ENCODE measurements at regions of chr7 and their contacts with region 1.

Region 1: DNA sequence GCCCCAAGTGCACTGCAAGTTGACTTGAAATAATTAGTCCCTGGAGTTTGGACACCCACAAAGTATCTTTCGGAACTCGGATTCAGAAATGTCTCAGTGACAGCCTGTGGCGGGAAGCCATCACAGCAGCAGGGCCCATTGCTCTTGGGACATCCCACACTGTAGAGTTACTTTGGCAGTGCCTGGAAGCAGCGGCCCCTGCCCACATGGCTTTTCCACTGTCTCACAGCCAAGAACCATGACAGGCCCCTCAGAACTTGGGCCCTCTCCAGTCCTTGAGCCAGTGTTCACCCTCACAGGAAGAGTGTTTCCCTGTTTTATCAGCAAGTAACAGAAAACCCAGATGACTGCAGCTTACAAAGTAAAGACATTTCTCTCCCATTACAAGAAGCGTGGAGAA is 477.0 kb upstream of the GALNT17 start:
- DNase-seq: peak in 1 of 2 donors; percentile 31
- ATAC-seq: peak in 1 of 4 donors; percentile 33
- H3K4me3 ChIP-seq: no peak overlapping the region
- H3K27ac ChIP-seq: no peak overlapping the region
- H3K4me1 ChIP-seq: peaks cover 26% of the 10 kb centered on the region
- H3K27me3 ChIP-seq: no peaks in the 10 kb centered on the region
- CTCF ChIP-seq: no peak

Region 2: DNA sequence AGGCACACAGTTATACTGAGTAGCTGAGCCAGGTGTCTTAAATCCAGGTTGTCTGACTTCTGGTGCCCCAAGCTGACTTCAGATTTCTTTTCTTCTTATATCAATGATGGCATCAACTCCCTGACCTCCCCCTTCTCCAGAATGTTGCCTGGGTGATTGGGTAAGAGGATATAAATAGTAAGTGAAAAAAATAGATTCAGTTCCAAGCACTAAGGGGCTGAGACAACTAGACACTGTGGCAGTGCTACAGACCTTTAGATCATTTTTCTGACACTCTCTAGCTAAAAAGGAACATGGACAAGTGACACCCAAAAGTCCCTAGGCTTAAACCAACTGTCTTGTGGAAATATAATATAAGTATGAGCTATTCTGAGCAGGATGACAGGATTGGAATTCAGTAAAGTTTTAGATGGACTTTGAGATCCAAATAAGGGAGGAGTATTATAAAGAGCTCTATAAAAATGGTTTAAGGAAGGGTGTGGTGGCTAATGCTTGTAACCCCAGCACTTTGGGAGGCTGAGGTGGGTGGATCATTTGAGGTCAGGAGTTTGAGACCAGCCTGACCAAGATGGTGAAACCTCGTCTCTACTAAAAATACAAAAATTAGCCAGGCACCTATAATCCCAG is 112.1 kb before region 1 on chr7:
- intact Hi-C with region 1: loop called in 1 of 2 experiments (anchors 10 kb)
- DNase-seq: no peak
- ATAC-seq: peak; percentile 82 to 89 (median 88)
- H3K4me3 ChIP-seq: no peak overlapping the region
- H3K27ac ChIP-seq: peak overlapping the region; percentile 75
- H3K4me1 ChIP-seq: peaks cover 17% of the 10 kb centered on the region
- H3K27me3 ChIP-seq: no peaks in the 10 kb centered on the region
- CTCF ChIP-seq: no peak

Region 3: DNA sequence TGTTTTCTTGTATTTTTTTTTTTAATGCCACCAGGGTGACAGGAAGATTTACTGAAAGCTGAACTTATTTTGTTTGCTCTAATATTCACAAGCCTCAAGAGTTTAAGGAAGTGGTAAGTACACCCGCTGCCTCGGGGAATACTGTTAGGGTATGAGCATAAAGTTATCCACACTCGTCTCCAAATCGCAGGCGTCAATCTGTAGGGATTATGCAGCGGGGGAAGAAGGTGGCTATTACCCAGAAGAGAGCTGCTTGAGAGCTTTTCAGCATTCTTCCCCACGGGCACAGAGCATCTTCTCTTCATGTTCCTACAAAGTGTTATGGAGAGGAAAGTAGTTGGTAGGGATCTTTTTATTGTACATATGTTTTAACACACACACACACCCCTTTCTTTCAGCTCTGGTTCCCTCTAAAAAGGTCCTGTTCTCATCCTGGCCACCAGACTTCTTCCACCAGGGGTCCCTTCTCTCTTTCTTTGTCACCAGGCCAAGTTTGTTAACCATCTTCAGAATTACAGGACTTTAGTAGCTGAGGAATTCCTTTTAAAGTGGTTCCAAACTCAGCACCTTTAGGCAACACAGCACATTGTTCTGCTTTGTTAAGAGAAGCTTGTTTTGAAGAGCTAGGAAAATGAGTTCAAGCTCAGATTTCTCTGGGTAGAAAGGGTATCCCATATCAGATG is 65.4 kb after region 1 on chr7:
- intact Hi-C with region 1: no loop called
- DNase-seq: no peak
- ATAC-seq: no peak
- H3K4me3 ChIP-seq: no peak overlapping the region
- H3K27ac ChIP-seq: no peak overlapping the region
- H3K4me1 ChIP-seq: peaks cover 15% of the 10 kb centered on the region
- H3K27me3 ChIP-seq: no peaks in the 10 kb centered on the region
- CTCF ChIP-seq: no peak

Measured in psoas muscle (tissue), 8 donors.